Activated B cell treated with CpG ODN at 0.5 μM for 24 hours (primary cell): ENCODE measurements at regions of chr5 and their contacts with region 1.

Region 1: DNA sequence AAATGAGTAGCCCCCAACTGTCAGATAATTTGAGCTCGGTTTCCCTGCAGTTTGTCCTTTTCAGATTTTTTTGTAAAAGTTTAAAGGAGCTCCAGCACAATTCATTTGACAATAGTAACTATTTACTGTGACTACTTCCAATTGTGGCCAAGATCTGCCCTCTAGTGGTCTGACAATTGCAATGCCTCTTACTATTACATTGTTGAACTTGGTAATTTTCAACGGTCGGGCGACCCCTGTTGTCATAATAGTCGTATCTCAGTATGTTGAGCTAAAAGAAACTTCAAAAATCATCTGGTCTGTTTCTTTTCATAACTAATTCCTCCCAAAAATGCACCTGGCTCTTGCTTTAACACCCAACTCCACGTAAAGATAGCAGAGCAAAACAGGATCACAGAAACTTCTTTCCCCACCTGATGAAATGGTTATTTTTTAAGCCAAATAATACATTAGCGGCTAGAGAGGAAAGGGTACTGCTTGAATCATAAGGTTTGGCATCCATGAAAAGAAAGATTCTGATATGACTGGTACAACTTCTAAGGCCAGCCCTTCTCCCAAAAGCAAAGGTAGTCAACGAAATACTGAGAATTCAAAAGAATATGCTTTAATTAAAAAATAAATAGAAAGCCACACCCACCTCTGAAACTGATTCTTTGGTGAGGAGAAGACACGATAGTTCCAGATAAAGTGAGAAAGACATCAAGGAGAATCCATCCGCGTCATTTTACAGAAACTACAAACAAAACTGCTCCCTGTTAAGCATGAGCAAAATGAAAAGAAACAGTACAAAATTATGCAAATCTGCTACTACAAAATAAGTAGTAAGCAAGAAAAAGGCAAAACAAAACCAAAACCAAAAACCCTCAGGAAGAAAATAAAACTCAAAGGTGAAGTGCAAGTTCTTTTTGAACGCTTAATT is 76.9 kb upstream of the HTR4 start:
- DNase-seq: no peak
- ATAC-seq: peak; percentile 96
- H3K4me3 Mint-ChIP-seq: peak overlapping the region; percentile 72
- H3K27ac Mint-ChIP-seq: peak overlapping the region; percentile 59
- H3K4me1 Mint-ChIP-seq: peaks cover 8% of the 10 kb centered on the region
- H3K27me3 Mint-ChIP-seq: peaks cover 5% of the 10 kb centered on the region
- CTCF ChIP-seq: peak; percentile 31

Region 2: DNA sequence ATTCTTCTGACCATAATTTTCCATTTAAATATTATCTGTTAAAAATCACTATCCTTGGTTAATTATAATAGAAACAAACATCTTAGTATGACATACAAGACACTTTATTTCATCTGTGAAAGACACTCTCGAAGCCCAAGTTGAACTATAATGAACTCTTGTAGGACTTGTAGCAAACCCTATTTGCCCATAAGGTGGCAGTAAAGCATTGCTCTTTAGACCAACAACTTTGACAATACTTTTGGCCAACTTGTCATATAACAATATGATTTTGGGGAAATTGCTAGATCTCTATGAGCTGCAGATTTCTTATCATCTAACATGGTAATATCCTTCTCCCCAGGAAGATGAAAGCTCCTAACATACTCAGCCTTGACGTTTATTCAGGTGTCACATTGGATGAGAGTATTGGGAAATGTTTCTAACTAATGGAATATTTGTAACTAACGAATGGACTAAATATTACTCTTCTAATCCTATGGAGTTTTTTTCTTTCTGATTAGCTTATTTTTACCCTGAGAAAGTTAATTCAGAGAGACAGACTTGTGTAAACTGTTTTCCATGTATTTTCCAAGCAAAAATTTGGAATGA is 551.9 kb before region 1 on chr5:
- CTCF ChIA-PET with region 1: interaction called, 9 read pairs
- POLR2A ChIA-PET with region 1: no interaction called
- intact Hi-C with region 1: loop called (anchors 1 kb)
- DNase-seq: no peak
- ATAC-seq: no peak
- H3K4me3 Mint-ChIP-seq: no peak overlapping the region
- H3K27ac Mint-ChIP-seq: no peak overlapping the region
- H3K4me1 Mint-ChIP-seq: no peaks in the 10 kb centered on the region
- H3K27me3 Mint-ChIP-seq: peaks cover 3% of the 10 kb centered on the region
- CTCF ChIP-seq: no peak

Region 3: GRCh38 chr5:148820461-148821395 is 89.5 kb after region 1 on chr5:
- CTCF ChIA-PET with region 1: interaction called, 12 read pairs
- POLR2A ChIA-PET with region 1: no interaction called
- intact Hi-C with region 1: no loop called
- DNase-seq: no peak
- ATAC-seq: peak; percentile 48
- H3K4me3 Mint-ChIP-seq: no peak overlapping the region
- H3K27ac Mint-ChIP-seq: no peak overlapping the region
- H3K4me1 Mint-ChIP-seq: peaks cover 56% of the 10 kb centered on the region
- H3K27me3 Mint-ChIP-seq: no peaks in the 10 kb centered on the region
- CTCF ChIP-seq: no peak

Region 4: GRCh38 chr5:148998174-148998797 is 267.1 kb after region 1 on chr5:
- CTCF ChIA-PET with region 1: interaction called, 118 read pairs
- POLR2A ChIA-PET with region 1: no interaction called
- intact Hi-C with region 1: loop called (anchors 1 kb)
- DNase-seq: no peak
- ATAC-seq: peak; percentile 52
- H3K4me3 Mint-ChIP-seq: no peak overlapping the region
- H3K27ac Mint-ChIP-seq: no peak overlapping the region
- H3K4me1 Mint-ChIP-seq: no peaks in the 10 kb centered on the region
- H3K27me3 Mint-ChIP-seq: peaks cover 23% of the 10 kb centered on the region
- CTCF ChIP-seq: no peak

Region 5: GRCh38 chr5:149114403-149115312 is 383.5 kb after region 1 on chr5:
- CTCF ChIA-PET with region 1: interaction called, 15 read pairs
- POLR2A ChIA-PET with region 1: no interaction called
- intact Hi-C with region 1: loop called (anchors 1 kb)
- DNase-seq: no peak
- ATAC-seq: peak; percentile 45
- H3K4me3 Mint-ChIP-seq: no peak overlapping the region
- H3K27ac Mint-ChIP-seq: no peak overlapping the region
- H3K4me1 Mint-ChIP-seq: no peaks in the 10 kb centered on the region
- H3K27me3 Mint-ChIP-seq: peaks cover 23% of the 10 kb centered on the region
- CTCF ChIP-seq: no peak